A673 (cell line): ENCODE measurements at regions of chr7 and their contacts with region 1.

Region 1: GRCh38 chr7:69782917-69783684 is 184.8 kb downstream of the AUTS2 start:
- DNase-seq: no peak
- H3K4me3 ChIP-seq: no peak overlapping the region
- H3K27ac ChIP-seq: no peak overlapping the region
- H3K4me1 ChIP-seq: peaks cover 29% of the 10 kb centered on the region
- H3K27me3 ChIP-seq: no peaks in the 10 kb centered on the region
- CTCF ChIP-seq: no peak

Region 2: GRCh38 chr7:68050627-68051026 is 1732.5 kb before region 1 on chr7:
- CTCF ChIA-PET with region 1: no interaction called
- POLR2A ChIA-PET with region 1: interaction called, 11 read pairs
- intact Hi-C with region 1: no loop called
- DNase-seq: no peak
- H3K4me3 ChIP-seq: no peak overlapping the region
- H3K27ac ChIP-seq: no peak overlapping the region
- H3K4me1 ChIP-seq: no peaks in the 10 kb centered on the region
- H3K27me3 ChIP-seq: no peaks in the 10 kb centered on the region
- CTCF ChIP-seq: no peak

Region 3: DNA sequence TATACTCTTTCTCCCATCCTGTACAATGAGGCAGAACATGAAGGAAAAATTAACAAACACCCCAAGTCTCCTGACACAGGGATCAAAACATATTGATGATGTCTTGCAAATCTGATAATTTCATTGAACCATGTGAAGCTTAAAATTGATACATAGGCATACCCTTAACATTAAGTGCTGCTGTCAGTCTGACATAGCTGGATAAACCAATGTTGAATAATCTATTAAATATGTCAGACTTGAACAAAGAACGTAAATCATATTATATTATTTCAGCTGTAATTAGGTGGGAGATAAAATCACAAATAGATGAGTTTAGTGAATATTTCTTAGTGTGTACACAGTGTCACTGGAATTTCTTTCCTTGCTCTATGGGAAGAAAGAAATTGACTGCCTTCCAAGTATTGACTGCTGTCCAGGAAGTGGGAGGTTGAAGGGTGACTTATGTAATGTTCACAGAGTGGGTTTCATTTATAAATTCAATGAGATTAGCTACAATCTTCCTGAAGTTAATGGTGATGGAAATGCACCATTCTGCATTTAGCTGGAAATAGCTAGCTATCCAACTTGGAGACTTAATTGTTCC is 14.0 kb before region 1 on chr7:
- CTCF ChIA-PET with region 1: no interaction called
- POLR2A ChIA-PET with region 1: interaction called, 10 read pairs
- intact Hi-C with region 1: no loop called
- DNase-seq: peak; percentile 83
- H3K4me3 ChIP-seq: no peak overlapping the region
- H3K27ac ChIP-seq: no peak overlapping the region
- H3K4me1 ChIP-seq: peaks cover 29% of the 10 kb centered on the region
- H3K27me3 ChIP-seq: no peaks in the 10 kb centered on the region
- CTCF ChIP-seq: no peak

Region 4: DNA sequence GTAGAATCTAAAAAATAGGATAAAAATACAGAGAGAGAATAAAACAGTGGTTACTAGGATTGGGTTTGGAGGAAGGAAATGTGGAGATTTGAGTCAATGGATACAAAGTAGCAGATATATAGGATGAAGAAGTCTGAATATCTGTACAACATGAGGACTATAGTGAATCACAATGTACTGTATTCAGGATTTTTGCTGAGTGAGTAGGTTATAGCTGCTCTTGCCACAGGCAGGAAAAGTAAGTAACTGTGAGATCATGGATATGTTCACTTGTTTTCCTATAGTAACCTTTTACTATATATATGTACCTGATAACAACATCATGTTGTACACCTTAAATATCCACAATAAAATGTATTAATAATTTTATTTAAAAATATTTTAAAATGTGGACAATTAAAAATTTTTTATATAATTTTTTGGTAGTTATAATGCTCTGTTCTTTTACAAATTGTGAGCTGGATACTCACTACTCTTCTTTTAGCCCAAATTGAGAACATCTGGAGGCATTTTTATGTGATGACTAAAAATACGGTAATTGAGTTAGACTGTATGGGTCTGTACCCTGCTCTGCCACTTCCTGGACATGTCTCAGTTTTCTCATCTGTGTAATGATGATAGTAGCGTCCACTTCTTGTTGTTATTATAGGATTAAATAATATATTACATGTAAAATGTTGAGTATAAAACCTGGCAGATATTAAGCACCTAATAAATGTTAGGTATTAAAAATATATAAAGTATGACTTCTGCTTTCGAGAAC is 254.3 kb after region 1 on chr7:
- CTCF ChIA-PET with region 1: no interaction called
- POLR2A ChIA-PET with region 1: no interaction called
- intact Hi-C with region 1: no loop called
- DNase-seq: peak; percentile 61
- H3K4me3 ChIP-seq: no peak overlapping the region
- H3K27ac ChIP-seq: no peak overlapping the region
- H3K4me1 ChIP-seq: peaks cover 37% of the 10 kb centered on the region
- H3K27me3 ChIP-seq: no peaks in the 10 kb centered on the region
- CTCF ChIP-seq: no peak